Posterior cingulate gyrus (tissue), 11 donors: ENCODE measurements at regions of chr3 and their contacts with region 1.

Region 1: GRCh38 chr3:124351430-124352148 is 359.7 kb upstream of the ROPN1 start:
- DNase-seq: peak in 2 of 10 donors; percentile 33 to 38

Region 2: GRCh38 chr3:124467980-124468902 is 116.7 kb after region 1 on chr3:
- intact Hi-C with region 1: loop called (anchors 5 kb)
- DNase-seq: peak in 9 of 10 donors; percentile 40 to 94 (median 67)

Region 3: GRCh38 chr3:124552239-124552638 is 200.7 kb after region 1 on chr3:
- intact Hi-C with region 1: loop called (anchors 5 kb)
- DNase-seq: no peak